GM12878 (cell line): ENCODE measurements at regions of chr11 and their contacts with region 1.

Region 1: DNA sequence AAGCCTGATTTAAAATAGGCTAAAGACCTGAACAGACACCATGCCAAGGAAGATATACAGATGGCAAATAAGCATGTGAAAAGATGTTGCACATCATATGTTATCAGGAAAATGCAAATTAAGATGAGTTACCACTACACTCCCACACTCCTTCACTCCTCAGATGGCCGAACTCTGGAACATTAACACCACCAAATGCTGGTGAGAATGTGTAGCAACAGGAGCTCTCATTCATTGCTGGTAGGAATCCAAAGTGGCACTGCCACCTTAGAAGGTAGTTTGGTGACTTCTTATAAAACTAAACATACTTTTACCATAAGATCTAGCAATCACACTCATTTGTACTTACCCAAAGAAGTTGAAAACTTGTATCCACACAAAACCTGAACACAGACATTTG is 2047.3 kb downstream of the LRRC4C start:
- DNase-seq: no peak
- ATAC-seq: no peak
- H3K4me3 ChIP-seq: no peak overlapping the region
- H3K27ac ChIP-seq: no peak overlapping the region
- H3K4me1 ChIP-seq: no peaks in the 10 kb centered on the region
- H3K27me3 ChIP-seq: no peaks in the 10 kb centered on the region
- CTCF ChIP-seq: no peak
- EP300 ChIP-seq: no peak
- POLR2A ChIP-seq: no peak
- RAD21 ChIP-seq: no peak

Region 2: GRCh38 chr11:39345847-39346442 is 66.2 kb before region 1 on chr11:
- CTCF ChIA-PET with region 1: no interaction called
- POLR2A ChIA-PET with region 1: no interaction called
- RAD21 ChIA-PET with region 1: no interaction called
- SMC1A ChIA-PET with region 1: no interaction called
- in situ Hi-C with region 1: loop called (anchors 10 kb)
- intact Hi-C with region 1: no loop called
- DNase-seq: no peak
- ATAC-seq: no peak
- H3K4me3 ChIP-seq: no peak overlapping the region
- H3K27ac ChIP-seq: no peak overlapping the region
- H3K4me1 ChIP-seq: no peaks in the 10 kb centered on the region
- H3K27me3 ChIP-seq: no peaks in the 10 kb centered on the region
- CTCF ChIP-seq: no peak
- EP300 ChIP-seq: no peak
- POLR2A ChIP-seq: no peak
- RAD21 ChIP-seq: no peak

Region 3: DNA sequence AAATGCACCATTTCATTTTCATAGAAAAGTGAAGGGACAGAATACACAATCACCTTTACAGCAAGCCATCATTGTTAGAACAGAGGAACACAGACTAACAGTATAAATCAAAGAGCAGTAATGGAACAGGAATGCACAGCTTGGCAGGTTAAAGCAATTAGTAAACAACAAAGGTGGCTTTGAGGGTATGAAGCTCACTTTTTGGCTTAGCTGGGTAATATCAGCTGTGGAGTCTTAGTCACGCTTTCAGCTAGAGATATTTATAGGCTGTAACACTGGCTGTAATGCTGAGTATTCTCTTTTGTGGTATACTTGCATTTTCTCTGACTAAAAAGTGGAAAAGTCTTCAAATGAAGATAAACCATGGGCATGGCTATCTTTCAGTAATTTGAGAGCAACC is 266.9 kb after region 1 on chr11:
- CTCF ChIA-PET with region 1: no interaction called
- POLR2A ChIA-PET with region 1: no interaction called
- RAD21 ChIA-PET with region 1: no interaction called
- SMC1A ChIA-PET with region 1: no interaction called
- in situ Hi-C with region 1: no loop called
- intact Hi-C with region 1: no loop called
- DNase-seq: no peak
- ATAC-seq: no peak
- H3K4me3 ChIP-seq: no peak overlapping the region
- H3K27ac ChIP-seq: no peak overlapping the region
- H3K4me1 ChIP-seq: no peaks in the 10 kb centered on the region
- H3K27me3 ChIP-seq: no peaks in the 10 kb centered on the region
- CTCF ChIP-seq: no peak
- EP300 ChIP-seq: no peak
- POLR2A ChIP-seq: no peak
- RAD21 ChIP-seq: no peak